GM12878 (cell line): ENCODE measurements at regions of chr5 and their contacts with region 1.

Region 1: GRCh38 chr5:56270568-56271392 is 37.6 kb upstream of the ANKRD55 start:
- DNase-seq: peak; percentile 62
- ATAC-seq: peak; percentile 97
- H3K4me3 ChIP-seq: no peak overlapping the region
- H3K27ac ChIP-seq: no peak overlapping the region
- H3K4me1 ChIP-seq: no peaks in the 10 kb centered on the region
- H3K27me3 ChIP-seq: no peaks in the 10 kb centered on the region
- CTCF ChIP-seq: peak; percentile 89 to 99 (median 99)
- EP300 ChIP-seq: no peak
- POLR2A ChIP-seq: no peak
- RAD21 ChIP-seq: peak; percentile 99

Region 2: GRCh38 chr5:56003179-56003578 is 267.6 kb before region 1 on chr5:
- CTCF ChIA-PET with region 1: no interaction called
- POLR2A ChIA-PET with region 1: no interaction called
- RAD21 ChIA-PET with region 1: no interaction called
- SMC1A ChIA-PET with region 1: no interaction called
- in situ Hi-C with region 1: no loop called
- intact Hi-C with region 1: no loop called
- DNase-seq: no peak
- ATAC-seq: no peak
- H3K4me3 ChIP-seq: no peak overlapping the region
- H3K27ac ChIP-seq: no peak overlapping the region
- H3K4me1 ChIP-seq: peaks cover 6% of the 10 kb centered on the region; the same call in 1 of the 2 replicates
- H3K27me3 ChIP-seq: no peaks in the 10 kb centered on the region
- CTCF ChIP-seq: no peak
- EP300 ChIP-seq: no peak
- POLR2A ChIP-seq: no peak
- RAD21 ChIP-seq: no peak

Region 3: GRCh38 chr5:56200856-56201666 is 69.7 kb before region 1 on chr5:
- CTCF ChIA-PET with region 1: interaction called, 3 read pairs
- POLR2A ChIA-PET with region 1: no interaction called
- RAD21 ChIA-PET with region 1: no interaction called
- SMC1A ChIA-PET with region 1: interaction called, 4 read pairs
- in situ Hi-C with region 1: no loop called
- intact Hi-C with region 1: loop called (anchors 2 kb)
- DNase-seq: peak; percentile 90
- ATAC-seq: peak; percentile 100
- H3K4me3 ChIP-seq: no peak overlapping the region
- H3K27ac ChIP-seq: no peak overlapping the region
- H3K4me1 ChIP-seq: no peaks in the 10 kb centered on the region
- H3K27me3 ChIP-seq: no peaks in the 10 kb centered on the region
- CTCF ChIP-seq: peak; percentile 74 to 93 (median 78); a peak in 5 of 6 replicates
- EP300 ChIP-seq: no peak
- POLR2A ChIP-seq: no peak
- RAD21 ChIP-seq: peak; percentile 95

Region 4: DNA sequence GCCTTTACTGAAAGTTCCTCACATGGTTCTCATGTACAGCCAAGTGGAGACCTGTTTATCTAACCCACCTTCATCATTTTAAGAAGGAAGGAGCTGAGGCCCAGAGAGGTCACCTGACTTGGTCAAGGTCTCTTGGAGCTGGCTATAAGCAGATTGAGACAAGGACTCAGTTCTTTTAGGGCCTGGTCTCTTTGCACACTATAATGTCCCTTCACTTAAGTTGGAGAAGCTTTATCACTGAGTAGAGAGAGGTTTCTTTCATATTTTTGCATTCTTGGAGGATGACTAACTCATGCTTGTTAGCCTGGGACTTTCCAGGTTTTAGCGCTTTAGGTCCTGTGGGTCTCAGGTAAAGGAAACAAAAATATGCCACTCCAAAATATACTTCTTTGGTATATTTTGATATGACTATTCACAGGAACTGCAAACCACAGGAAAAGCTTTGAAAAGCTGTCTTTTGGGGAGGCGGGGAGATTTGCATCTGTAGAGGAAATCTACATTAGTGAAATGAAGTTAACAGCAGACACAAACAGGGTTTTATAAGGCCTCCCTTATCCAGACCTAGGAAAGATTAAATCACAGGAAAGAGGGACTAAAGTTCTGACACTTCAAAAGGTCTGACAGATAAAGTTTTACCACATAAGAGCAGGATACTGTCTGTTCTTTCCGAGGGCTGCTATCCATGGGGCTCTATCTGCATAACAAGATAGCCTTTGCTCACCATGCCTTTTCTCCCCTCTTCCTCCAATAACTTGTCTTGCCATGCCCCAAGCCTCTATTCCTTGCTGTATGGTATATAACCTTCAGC is 58.2 kb after region 1 on chr5:
- CTCF ChIA-PET with region 1: interaction called, 13 read pairs
- POLR2A ChIA-PET with region 1: no interaction called
- RAD21 ChIA-PET with region 1: interaction called, 21 read pairs
- SMC1A ChIA-PET with region 1: interaction called, 13 read pairs
- in situ Hi-C with region 1: no loop called
- intact Hi-C with region 1: no loop called
- DNase-seq: peak; percentile 78
- ATAC-seq: peak; percentile 82
- H3K4me3 ChIP-seq: peak overlapping the region; percentile 14; the same call in 1 of the 2 replicates
- H3K27ac ChIP-seq: peak overlapping the region; percentile 59
- H3K4me1 ChIP-seq: peaks cover 21% of the 10 kb centered on the region
- H3K27me3 ChIP-seq: no peaks in the 10 kb centered on the region
- CTCF ChIP-seq: no peak
- EP300 ChIP-seq: peak in 1 of 2 experiments; percentile 70; a peak in 1 of 4 replicates
- POLR2A ChIP-seq: no peak
- RAD21 ChIP-seq: no peak

Region 5: GRCh38 chr5:56686337-56687195 is 415.8 kb after region 1 on chr5:
- CTCF ChIA-PET with region 1: interaction called, 4 read pairs
- POLR2A ChIA-PET with region 1: no interaction called
- RAD21 ChIA-PET with region 1: interaction called, 6 read pairs
- SMC1A ChIA-PET with region 1: no interaction called
- in situ Hi-C with region 1: no loop called
- intact Hi-C with region 1: loop called (anchors 10 kb)
- DNase-seq: peak; percentile 46
- ATAC-seq: peak; percentile 87
- H3K4me3 ChIP-seq: peak overlapping the region; percentile 35; the same call in 1 of the 2 replicates
- H3K27ac ChIP-seq: peak overlapping the region; percentile 68
- H3K4me1 ChIP-seq: peaks cover 24% of the 10 kb centered on the region
- H3K27me3 ChIP-seq: no peaks in the 10 kb centered on the region
- CTCF ChIP-seq: no peak
- EP300 ChIP-seq: peak; percentile 76 to 92
- POLR2A ChIP-seq: no peak
- RAD21 ChIP-seq: no peak

Region 6: DNA sequence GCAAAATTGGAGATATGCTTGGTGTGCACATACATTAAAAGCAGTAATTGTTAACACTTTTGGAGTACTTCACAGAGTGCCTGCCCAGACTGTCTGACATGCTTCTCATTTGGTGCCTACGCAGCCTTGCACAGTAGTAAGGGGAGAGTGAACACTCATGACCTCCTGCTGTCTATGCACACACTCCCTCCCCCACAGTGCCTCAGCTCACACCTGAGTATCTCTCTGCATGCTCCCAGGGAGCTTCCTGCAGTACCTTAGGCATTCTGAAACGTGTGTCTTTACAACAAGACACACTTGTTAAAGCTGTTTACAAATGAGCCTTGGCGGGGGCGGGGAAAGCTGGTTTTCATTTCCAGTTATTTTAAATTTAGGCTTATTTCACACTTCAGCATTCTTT is 562.5 kb after region 1 on chr5:
- CTCF ChIA-PET with region 1: interaction called, 296 read pairs
- POLR2A ChIA-PET with region 1: interaction called, 3 read pairs
- RAD21 ChIA-PET with region 1: interaction called, 174 read pairs
- SMC1A ChIA-PET with region 1: interaction called, 164 read pairs
- in situ Hi-C with region 1: loop called (anchors 5 kb)
- intact Hi-C with region 1: loop called (anchors 1 kb)
- DNase-seq: no peak
- ATAC-seq: no peak
- H3K4me3 ChIP-seq: no peak overlapping the region
- H3K27ac ChIP-seq: no peak overlapping the region
- H3K4me1 ChIP-seq: peaks cover 7% of the 10 kb centered on the region
- H3K27me3 ChIP-seq: no peaks in the 10 kb centered on the region
- CTCF ChIP-seq: no peak
- EP300 ChIP-seq: no peak
- POLR2A ChIP-seq: no peak
- RAD21 ChIP-seq: no peak

Region 7: DNA sequence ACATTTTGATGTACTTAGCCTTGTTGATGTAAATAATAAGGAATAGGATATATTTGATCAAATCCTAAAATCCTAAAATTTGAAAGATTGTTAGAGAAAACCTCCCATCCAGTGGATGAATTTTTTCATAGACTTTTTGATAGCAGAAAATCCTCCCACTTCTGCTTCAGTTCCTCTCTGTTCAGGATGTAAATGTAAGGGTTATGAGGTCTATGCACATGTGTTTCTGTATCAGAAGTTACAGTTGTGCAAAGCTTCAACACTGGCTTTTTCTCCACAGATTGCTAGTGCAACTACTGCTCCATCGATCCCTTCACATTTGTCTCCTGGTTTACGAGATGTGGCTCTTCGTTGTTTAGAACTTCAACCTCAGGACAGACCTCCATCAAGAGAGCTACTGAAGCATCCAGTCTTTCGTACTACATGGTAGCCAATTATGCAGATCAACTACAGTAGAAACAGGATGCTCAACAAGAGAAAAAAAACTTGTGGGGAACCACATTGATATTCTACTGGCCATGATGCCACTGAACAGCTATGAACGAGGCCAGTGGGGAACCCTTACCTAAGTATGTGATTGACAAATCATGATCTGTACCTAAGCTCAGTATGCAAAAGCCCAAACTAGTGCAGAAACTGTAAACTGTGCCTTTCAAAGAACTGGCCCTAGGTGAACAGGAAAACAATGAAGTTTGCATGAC is 622.6 kb after region 1 on chr5:
- CTCF ChIA-PET with region 1: interaction called, 19 read pairs
- POLR2A ChIA-PET with region 1: no interaction called
- RAD21 ChIA-PET with region 1: interaction called, 14 read pairs
- SMC1A ChIA-PET with region 1: interaction called, 11 read pairs
- in situ Hi-C with region 1: no loop called
- intact Hi-C with region 1: no loop called
- DNase-seq: no peak
- ATAC-seq: no peak
- H3K4me3 ChIP-seq: no peak overlapping the region
- H3K27ac ChIP-seq: no peak overlapping the region
- H3K4me1 ChIP-seq: no peaks in the 10 kb centered on the region
- H3K27me3 ChIP-seq: no peaks in the 10 kb centered on the region
- CTCF ChIP-seq: no peak
- EP300 ChIP-seq: no peak
- POLR2A ChIP-seq: no peak
- RAD21 ChIP-seq: no peak